ENCODE measurements at regions of chr16 and their contacts with region 1.

Region 1: DNA sequence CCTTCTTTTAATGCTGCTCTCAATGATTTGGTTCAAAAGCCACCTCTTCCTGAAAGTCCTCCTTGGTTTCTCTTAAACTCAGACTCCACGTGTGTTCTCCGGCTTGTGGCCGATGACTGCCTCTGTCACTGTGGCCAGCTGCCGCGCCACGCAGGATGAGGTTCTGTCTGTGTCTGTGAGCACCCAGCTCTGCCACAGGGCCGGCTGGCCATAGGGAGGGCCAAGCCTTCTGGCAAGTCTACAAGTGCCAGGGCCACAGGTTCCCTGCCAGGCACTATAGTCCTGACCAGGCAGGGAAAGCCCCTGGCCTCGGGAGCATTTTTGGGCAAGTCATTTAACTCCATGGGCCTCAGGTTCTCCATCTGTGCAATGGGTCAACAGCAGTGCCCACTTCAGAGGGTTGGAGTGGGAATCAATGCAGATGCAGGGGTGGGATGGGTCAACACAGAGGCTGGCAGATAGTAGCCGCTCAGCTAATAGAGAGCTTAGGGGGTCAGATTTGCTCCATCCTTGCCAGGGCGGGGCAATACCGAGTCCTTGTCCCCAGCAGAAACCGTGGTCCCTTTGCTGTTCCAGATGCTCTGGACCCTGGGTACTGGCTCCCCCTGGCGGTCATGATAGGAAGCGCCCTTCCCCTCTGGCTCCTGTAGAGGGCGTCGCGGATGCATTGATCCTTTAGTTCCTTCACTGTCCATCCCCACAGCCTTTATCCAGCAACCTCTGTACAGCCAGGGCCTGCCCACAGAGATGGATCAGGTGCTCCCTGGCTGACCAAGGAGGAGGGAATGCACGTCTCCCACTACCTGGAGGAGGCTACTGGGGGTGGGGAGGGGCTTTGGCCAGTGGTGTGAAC is 19.3 kb upstream of the ADGRG3 start:
- DNase-seq: peak in 1 of 2 donors; percentile 85
- H3K4me3 ChIP-seq: no peak overlapping the region
- H3K27ac ChIP-seq: no peak overlapping the region
- H3K4me1 ChIP-seq: no peaks in the 10 kb centered on the region
- H3K27me3 ChIP-seq: no peaks in the 10 kb centered on the region
- CTCF ChIP-seq: peak; percentile 94 to 96 (median 95)

Region 2: DNA sequence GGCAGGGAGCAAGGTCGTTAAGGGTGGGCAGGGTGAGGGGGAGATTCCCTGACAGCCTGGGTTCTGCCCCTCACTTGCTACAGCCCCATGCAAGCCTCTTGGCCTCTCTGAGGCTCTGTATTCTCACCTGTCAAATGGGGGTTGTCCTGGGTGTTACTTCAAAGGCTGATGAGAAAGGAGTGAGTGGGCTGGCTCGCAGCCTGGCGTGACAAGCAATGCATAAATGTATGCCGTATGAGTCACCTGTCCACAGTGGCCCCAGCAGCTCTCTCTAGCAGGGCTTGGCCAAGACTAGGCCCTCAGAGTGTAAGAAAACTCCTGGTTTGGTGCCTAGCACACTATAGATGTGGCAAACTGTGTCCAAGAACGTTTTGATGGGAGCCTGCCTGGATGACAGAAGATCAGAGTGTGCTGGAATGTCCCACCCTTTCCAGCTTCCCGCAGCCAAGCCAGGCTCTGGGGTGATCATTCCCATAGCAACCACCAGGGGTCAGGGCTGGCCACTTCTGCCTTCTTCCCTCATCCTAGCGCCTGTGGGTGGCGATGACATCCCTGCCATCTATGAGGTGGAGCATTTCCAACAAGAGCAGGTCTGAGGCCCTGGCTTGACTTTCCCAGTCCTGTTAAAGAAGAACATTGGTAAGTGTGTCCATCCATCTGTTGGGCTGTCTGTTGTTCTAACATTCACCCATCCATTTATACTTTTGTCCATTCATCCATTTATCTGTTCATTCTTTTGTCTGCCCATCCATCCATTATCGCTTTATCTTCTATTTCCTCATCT is 57.5 kb before region 1 on chr16:
- intact Hi-C with region 1: loop called (anchors 5 kb)
- DNase-seq: peak in 1 of 2 donors; percentile 81
- H3K4me3 ChIP-seq: no peak overlapping the region
- H3K27ac ChIP-seq: no peak overlapping the region
- H3K4me1 ChIP-seq: no peaks in the 10 kb centered on the region
- H3K27me3 ChIP-seq: no peaks in the 10 kb centered on the region
- CTCF ChIP-seq: peak; percentile 70 to 78 (median 72)